ENCODE measurements at regions of chr5 and their contacts with region 1.

Region 1: DNA sequence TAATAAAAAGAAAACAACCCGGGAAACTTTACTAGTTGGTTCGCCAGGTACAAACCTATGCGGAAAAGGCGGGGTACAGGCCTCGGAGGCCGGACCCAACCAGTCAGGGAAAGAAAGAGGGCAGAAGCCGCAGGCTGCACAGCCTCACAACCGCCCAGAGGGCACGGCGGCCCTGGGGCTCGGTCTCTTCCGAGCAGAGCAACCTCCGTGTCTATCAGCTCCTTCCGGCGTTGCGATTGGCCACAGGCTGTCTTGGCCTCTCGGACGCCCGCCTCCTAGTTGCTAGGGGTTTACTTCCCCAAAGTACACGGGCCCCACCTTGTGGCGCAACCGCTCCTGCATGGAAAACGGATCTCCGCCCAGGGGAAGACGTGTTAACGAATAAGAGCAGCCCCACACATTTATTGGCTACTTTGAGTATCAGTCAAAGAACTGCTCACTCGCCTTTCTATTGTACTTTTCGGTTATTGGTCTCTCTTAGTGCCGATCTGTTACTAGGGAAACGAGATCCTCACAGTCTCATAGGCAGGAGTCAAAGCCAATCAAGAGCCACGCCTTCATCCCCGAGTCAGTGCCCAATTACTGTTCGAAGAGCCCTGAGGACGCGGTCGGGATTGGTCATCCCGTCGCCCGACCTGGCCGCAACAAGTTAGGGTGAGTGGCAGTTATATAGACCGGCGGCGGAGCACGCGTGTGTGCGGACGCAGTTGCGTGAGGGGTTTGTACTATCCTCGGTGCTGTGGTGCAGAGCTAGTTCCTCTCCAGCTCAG is at the start of gene G3BP1:
- DNase-seq: peak; percentile 100
- ATAC-seq: peak; percentile 94
- H3K4me3 ChIP-seq: peak within 1 kb of the TSS; percentile 91 to 97 (median 95)
- H3K27ac ChIP-seq: peak within 1 kb of the TSS; percentile 93
- H3K4me1 ChIP-seq: peaks cover 37% of the 10 kb centered on the region
- H3K27me3 ChIP-seq: no peaks in the 10 kb centered on the region; a peak in 1 of 5 replicates
- CTCF ChIP-seq: peak; percentile 89
- EP300 ChIP-seq: peak; percentile 26 to 32; a peak in 2 of 4 replicates
- POLR2A ChIP-seq: peak; percentile 98 to 99
- RAD21 ChIP-seq: peak; percentile 67
- total RNA-seq, gene G3BP1: 320 and 517 TPM in 2 replicates

Region 2: GRCh38 chr5:151659001-151659754 is 112.3 kb before region 1 on chr5:
- CTCF ChIA-PET with region 1: no interaction called
- POLR2A ChIA-PET with region 1: interaction called, 8 read pairs
- in situ Hi-C with region 1: no loop called
- intact Hi-C with region 1: loop called (anchors 1 kb)
- DNase-seq: peak; percentile 57
- ATAC-seq: peak; percentile 96
- H3K4me3 ChIP-seq: no peak overlapping the region
- H3K27ac ChIP-seq: no peak overlapping the region
- H3K4me1 ChIP-seq: peaks cover 9% of the 10 kb centered on the region
- H3K27me3 ChIP-seq: peaks cover 0 to 10% of the 10 kb centered on the region in 2 experiments; a peak in 2 of 5 replicates
- CTCF ChIP-seq: peak; percentile 91
- EP300 ChIP-seq: no peak
- POLR2A ChIP-seq: no peak
- RAD21 ChIP-seq: peak; percentile 90

Region 3: DNA sequence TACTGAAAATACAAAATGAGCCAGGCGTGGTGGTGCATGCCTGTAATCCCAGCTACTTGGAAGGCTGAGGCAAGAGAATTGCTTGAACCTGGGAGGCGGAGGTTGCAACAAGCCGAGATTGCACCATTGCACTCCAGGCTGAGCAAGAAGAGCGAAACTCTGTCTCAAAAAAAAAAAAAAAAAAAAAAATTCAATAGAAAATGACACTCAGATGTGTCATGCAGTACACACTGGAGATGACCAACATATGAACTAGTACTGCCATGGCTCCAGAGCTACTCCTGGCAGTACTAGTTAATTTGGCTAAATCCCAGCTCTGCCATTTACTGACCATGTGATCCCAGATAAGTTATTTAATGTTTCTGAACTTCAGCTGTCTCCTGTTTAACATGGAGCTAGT is 20.4 kb before region 1 on chr5:
- CTCF ChIA-PET with region 1: no interaction called
- POLR2A ChIA-PET with region 1: interaction called, 148 read pairs
- in situ Hi-C with region 1: no loop called
- intact Hi-C with region 1: no loop called
- DNase-seq: no peak
- ATAC-seq: no peak
- H3K4me3 ChIP-seq: no peak overlapping the region
- H3K27ac ChIP-seq: no peak overlapping the region
- H3K4me1 ChIP-seq: peaks cover 27% of the 10 kb centered on the region
- H3K27me3 ChIP-seq: no peaks in the 10 kb centered on the region
- CTCF ChIP-seq: no peak
- EP300 ChIP-seq: no peak
- POLR2A ChIP-seq: no peak
- RAD21 ChIP-seq: no peak

Region 4: GRCh38 chr5:151786468-151786867 is 15.0 kb after region 1 on chr5:
- CTCF ChIA-PET with region 1: no interaction called
- POLR2A ChIA-PET with region 1: interaction called, 31 read pairs
- in situ Hi-C with region 1: no loop called
- intact Hi-C with region 1: no loop called
- DNase-seq: no peak
- ATAC-seq: peak; percentile 78
- H3K4me3 ChIP-seq: no peak overlapping the region
- H3K27ac ChIP-seq: no peak overlapping the region
- H3K4me1 ChIP-seq: peaks cover 49% of the 10 kb centered on the region
- H3K27me3 ChIP-seq: no peaks in the 10 kb centered on the region
- CTCF ChIP-seq: no peak
- EP300 ChIP-seq: no peak
- POLR2A ChIP-seq: no peak
- RAD21 ChIP-seq: no peak

Region 5: GRCh38 chr5:151825445-151825844 is 54.0 kb after region 1 on chr5:
- CTCF ChIA-PET with region 1: no interaction called
- POLR2A ChIA-PET with region 1: interaction called, 73 read pairs
- in situ Hi-C with region 1: no loop called
- intact Hi-C with region 1: loop called (anchors 2 kb)
- DNase-seq: peak; percentile 64
- ATAC-seq: peak; percentile 61
- H3K4me3 ChIP-seq: no peak overlapping the region
- H3K27ac ChIP-seq: no peak overlapping the region
- H3K4me1 ChIP-seq: peaks cover 16% of the 10 kb centered on the region
- H3K27me3 ChIP-seq: no peaks in the 10 kb centered on the region
- CTCF ChIP-seq: peak; percentile 87
- EP300 ChIP-seq: no peak
- POLR2A ChIP-seq: no peak
- RAD21 ChIP-seq: peak; percentile 80